ENCODE measurements at regions of chr14 and their contacts with region 1.

Region 1: GRCh38 chr14:89618811-89619551 is 201.9 kb upstream of the FOXN3 start:
- DNase-seq: peak; percentile 92
- H3K4me3 Mint-ChIP-seq: peak overlapping the region; percentile 97
- H3K27ac Mint-ChIP-seq: peak overlapping the region; percentile 97
- H3K4me1 Mint-ChIP-seq: peaks cover 68% of the 10 kb centered on the region
- H3K27me3 Mint-ChIP-seq: no peaks in the 10 kb centered on the region

Region 2: DNA sequence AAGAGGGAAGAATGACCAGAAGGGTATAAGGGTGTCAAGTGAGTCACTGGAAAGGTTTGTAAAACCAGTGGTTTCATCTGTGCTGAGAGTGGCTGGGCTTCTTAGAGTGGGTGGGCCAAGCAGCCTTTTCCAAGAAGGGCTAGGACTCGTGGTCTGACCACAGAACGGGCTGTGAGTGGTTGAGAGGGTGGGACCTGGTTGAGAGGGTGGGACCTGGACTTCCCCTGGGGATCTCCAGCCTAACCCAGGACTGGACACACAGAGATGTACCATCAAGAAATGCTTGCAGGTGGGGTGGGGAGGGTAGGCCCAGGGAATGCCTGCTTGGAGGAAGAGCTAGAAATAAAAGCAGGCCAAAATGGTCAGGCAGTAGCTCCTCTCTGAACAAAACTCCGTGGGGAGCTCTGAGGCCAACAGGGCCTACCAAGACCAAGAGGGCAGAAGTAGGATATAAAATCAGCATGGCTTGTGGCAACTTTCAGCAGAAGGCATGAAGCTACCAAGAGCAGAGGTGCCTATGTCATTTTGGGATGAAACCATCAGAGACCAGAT is 342.5 kb before region 1 on chr14:
- intact Hi-C with region 1: loop called (anchors 5 kb)
- DNase-seq: peak; percentile 92
- H3K4me3 Mint-ChIP-seq: peak overlapping the region; percentile 62
- H3K27ac Mint-ChIP-seq: peak overlapping the region; percentile 94
- H3K4me1 Mint-ChIP-seq: peaks cover 61% of the 10 kb centered on the region
- H3K27me3 Mint-ChIP-seq: no peaks in the 10 kb centered on the region

Region 3: GRCh38 chr14:89430391-89431236 is 188.4 kb before region 1 on chr14:
- intact Hi-C with region 1: loop called (anchors 2 kb)
- DNase-seq: peak; percentile 85
- H3K4me3 Mint-ChIP-seq: peak overlapping the region; percentile 78
- H3K27ac Mint-ChIP-seq: peak overlapping the region; percentile 92
- H3K4me1 Mint-ChIP-seq: peaks cover 43% of the 10 kb centered on the region
- H3K27me3 Mint-ChIP-seq: no peaks in the 10 kb centered on the region

Region 4: DNA sequence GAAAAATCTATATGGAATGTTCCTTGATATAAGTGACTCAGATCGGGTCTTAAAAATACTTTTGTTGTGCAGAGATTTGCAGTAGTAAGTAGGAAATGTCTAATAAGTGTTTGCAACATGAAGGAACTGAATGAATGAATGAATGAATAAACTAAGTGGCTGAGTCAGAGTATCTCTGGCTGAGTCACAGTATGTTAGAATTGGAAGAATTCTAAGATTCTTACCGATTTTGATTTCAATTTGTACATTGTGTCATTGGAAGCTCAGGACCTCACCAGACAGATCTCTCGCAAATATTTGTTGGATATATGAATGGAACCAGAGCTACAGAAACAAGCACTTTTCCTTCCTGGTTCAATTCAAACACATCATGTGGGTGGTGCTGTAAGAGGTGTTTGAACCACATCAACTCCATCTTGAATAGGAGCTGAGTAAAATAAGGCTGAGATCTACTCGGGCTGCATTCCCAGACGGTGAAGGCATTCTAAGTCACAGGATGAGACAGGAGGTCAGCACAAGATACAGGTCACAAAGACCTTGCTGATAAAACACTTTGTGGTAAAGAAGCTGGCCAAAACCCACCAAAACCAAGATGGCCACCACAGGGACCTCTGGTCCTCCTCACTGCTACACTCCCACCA is 78.0 kb before region 1 on chr14:
- intact Hi-C with region 1: no loop called
- DNase-seq: no peak
- H3K4me3 Mint-ChIP-seq: no peak overlapping the region
- H3K27ac Mint-ChIP-seq: no peak overlapping the region
- H3K4me1 Mint-ChIP-seq: peaks cover 20% of the 10 kb centered on the region
- H3K27me3 Mint-ChIP-seq: no peaks in the 10 kb centered on the region

Region 5: DNA sequence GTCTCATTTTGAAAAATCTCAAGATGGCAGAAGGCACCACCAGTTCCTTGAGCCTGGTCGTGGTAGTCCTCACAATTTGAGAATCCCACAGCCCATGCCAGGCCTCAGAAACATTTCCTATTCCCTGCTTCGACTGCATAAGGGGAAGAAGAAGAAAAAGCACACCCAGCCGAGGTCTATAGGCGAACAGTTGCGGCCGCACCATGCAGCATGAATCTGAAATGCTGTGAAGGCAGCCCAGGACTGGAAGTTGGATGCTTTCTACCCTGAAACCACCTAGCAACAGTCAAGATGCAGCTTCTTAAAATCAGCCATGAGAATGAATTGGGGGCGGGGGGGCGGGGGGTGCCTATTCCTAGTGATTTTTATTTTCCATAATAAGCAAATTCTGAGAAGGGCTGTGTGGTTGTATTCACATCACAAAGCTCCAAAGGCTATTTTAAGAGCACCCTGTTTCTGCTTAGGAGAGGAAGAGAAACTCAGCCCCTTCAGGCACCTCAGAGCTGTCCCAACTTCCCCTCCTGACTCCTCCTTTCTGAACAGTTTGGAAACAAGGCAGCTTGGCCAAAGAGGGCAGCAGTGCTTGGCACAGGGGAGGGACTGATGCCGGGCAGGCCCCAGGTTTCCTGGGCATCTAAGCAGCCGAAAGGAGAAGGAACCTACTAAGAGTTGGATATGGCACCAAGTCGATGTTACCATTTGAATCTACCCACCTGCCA is 29.4 kb before region 1 on chr14:
- intact Hi-C with region 1: no loop called
- DNase-seq: no peak
- H3K4me3 Mint-ChIP-seq: no peak overlapping the region
- H3K27ac Mint-ChIP-seq: peak overlapping the region; percentile 35
- H3K4me1 Mint-ChIP-seq: peaks cover 42% of the 10 kb centered on the region
- H3K27me3 Mint-ChIP-seq: no peaks in the 10 kb centered on the region

Region 6: DNA sequence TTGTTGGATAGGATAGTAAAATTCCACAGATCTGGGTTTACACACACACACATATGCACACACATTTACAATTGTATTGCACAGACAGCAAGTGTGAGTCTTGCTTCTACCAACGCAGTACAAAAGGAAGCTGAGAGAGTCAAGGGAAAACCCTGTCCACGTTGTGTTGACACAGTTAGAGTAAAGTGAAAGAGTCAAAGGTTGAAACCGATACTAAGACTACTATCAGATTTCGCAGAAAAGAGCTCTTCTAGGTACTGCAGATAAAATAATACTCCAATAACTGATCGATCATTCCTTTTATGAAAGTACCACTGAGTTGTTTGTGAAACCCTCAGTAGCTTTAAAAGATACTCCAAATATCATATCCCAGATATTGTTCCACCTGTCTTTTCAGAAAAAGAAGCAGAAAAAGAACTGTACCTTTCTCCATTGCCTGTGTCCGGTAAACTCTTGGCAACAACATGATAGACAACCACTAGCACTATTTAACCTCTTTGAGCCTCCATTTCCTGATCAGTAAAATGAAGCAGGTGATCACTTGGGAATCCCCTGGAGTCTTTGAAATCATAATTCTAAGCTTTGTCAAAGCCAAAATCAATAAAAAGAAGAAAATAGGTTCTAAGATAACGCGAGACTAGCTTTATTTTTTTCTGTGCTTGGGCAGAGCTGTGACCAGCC is 22.7 kb after region 1 on chr14:
- intact Hi-C with region 1: loop called (anchors 1 kb)
- DNase-seq: peak; percentile 86
- H3K4me3 Mint-ChIP-seq: peak overlapping the region; percentile 81
- H3K27ac Mint-ChIP-seq: peak overlapping the region; percentile 97
- H3K4me1 Mint-ChIP-seq: peaks cover 58% of the 10 kb centered on the region
- H3K27me3 Mint-ChIP-seq: no peaks in the 10 kb centered on the region

Region 7: DNA sequence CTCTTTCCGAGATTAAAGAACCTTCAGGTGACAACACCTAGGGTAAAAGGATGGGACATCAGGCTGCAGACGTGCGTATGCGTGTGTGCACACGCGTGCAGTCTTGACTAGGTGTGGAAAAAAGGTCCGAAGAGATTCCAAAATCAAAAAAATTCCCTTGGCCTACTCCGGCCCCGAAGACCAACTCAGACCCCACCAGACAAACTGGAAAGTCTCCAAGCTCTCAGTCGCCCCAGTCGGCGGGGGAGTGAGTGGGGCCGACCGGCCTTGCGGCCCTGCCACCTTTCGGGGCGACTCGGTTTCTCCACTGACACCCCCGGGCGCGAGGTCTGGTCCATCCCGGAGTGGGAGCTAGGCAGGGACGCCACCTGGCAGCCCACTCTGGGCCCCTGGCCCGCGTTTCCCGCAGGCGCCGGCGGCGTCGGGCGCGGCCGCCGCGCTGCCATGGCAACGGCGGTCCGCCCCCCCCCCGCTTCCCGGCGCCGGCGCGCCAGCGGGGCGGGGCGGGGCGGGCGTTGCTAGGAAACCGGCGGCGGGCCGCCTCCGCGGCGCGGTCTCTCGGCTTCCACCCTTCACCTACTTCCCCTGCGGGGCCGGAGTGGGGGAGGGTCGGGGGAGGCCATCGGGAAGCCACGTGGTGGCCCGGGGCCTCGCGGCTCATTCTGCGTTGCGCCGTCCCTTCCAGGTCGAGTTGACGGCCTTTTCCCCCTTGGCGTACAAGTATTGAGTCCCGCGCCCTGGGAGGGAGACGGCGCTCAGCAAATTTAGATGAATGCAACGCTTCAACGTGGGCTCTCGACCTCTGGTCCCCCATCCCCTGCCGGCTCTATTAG is 82.4 kb after region 1 on chr14:
- intact Hi-C with region 1: loop called (anchors 2 kb)
- DNase-seq: peak; percentile 95
- H3K4me3 Mint-ChIP-seq: peak overlapping the region; percentile 76
- H3K27ac Mint-ChIP-seq: peak overlapping the region; percentile 88
- H3K4me1 Mint-ChIP-seq: peaks cover 34% of the 10 kb centered on the region
- H3K27me3 Mint-ChIP-seq: no peaks in the 10 kb centered on the region

Region 8: DNA sequence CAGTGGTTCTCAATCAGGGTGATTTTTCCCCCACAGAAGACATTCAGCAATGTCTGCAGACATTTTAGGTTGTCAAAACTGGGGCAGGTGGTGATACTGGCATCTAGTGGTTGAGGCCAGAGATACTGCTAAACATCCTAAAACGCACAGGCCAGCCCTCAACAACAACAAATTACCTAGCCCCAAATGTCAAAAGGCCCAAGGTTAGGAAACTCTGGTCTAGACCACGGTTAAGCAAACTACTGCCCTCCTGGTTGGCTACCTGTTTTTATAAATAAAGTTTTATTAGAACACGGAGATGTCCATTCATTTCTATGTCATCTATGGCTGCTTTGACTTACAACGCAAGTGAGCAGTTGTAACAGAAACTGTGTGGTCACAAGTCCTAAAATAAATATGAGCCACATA is 148.9 kb after region 1 on chr14:
- intact Hi-C with region 1: loop called (anchors 5 kb)
- DNase-seq: peak; percentile 89
- H3K4me3 Mint-ChIP-seq: no peak overlapping the region
- H3K27ac Mint-ChIP-seq: peak overlapping the region; percentile 12
- H3K4me1 Mint-ChIP-seq: peaks cover 16% of the 10 kb centered on the region
- H3K27me3 Mint-ChIP-seq: peaks cover 12% of the 10 kb centered on the region